ENCODE measurements at regions of chr11 and their contacts with region 1.

Region 1: GRCh38 chr11:60756307-60757032 is at the start of gene MS4A15:
- DNase-seq: no peak
- H3K4me3 ChIP-seq: no peak within 1 kb of the TSS
- H3K27ac ChIP-seq: no peak within 1 kb of the TSS
- H3K4me1 ChIP-seq: no peaks in the 10 kb centered on the region
- H3K27me3 ChIP-seq: no peaks in the 10 kb centered on the region
- CTCF ChIP-seq: peak; percentile 44
- total RNA-seq, gene MS4A15: 0.13 TPM in 1 of 2 donors, not detected in the other

Region 2: DNA sequence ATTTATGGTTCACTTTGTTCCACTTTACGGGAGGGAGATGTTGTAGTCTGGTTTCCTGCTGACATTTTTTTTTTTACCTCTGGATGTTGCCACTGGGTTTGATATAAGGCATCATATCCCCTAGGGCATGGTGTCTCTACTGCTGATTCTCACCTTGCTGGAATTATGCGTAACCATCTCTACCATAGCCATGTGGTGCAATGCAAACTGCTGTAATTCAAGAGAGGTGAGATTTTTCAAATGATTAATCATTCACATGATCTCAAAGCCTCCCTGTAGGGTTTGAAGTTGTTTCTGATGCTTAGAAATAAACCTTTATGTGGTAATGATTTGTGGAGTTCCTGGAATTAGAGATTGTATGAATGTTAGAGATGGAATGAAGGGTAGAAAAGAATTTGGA is 687.0 kb before region 1 on chr11:
- intact Hi-C with region 1: no loop called
- DNase-seq: no peak
- H3K4me3 ChIP-seq: no peak overlapping the region
- H3K27ac ChIP-seq: no peak overlapping the region
- H3K4me1 ChIP-seq: no peaks in the 10 kb centered on the region
- H3K27me3 ChIP-seq: no peaks in the 10 kb centered on the region
- CTCF ChIP-seq: no peak

Region 3: DNA sequence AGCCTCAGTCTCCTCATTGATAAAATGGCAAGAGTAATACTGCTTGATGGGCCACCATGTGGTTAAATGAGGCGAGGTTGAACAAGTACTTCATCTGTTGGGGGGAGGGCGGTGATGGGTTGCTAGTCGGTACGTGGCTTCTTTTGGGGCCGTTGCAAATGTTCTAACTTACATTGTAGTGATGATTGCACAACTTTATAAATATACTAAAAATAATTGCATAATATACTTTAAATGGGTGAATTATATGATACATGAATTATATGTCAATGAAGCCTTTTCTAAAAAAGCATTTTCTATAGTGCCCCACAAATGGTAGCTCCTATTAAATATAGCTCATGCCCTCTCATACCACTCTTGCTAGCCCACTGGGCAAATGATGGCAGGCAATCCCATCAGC is 50.6 kb before region 1 on chr11:
- intact Hi-C with region 1: loop called (anchors 5 kb)
- DNase-seq: no peak
- H3K4me3 ChIP-seq: no peak overlapping the region
- H3K27ac ChIP-seq: no peak overlapping the region
- H3K4me1 ChIP-seq: peaks cover 3% of the 10 kb centered on the region
- H3K27me3 ChIP-seq: no peaks in the 10 kb centered on the region
- CTCF ChIP-seq: no peak

Measured in colonic mucosa (tissue), 4 donors.